Naive thymus-derived CD8-positive, alpha-beta T cell (primary cell): ENCODE measurements at regions of chr17 and their contacts with region 1.

Region 1: DNA sequence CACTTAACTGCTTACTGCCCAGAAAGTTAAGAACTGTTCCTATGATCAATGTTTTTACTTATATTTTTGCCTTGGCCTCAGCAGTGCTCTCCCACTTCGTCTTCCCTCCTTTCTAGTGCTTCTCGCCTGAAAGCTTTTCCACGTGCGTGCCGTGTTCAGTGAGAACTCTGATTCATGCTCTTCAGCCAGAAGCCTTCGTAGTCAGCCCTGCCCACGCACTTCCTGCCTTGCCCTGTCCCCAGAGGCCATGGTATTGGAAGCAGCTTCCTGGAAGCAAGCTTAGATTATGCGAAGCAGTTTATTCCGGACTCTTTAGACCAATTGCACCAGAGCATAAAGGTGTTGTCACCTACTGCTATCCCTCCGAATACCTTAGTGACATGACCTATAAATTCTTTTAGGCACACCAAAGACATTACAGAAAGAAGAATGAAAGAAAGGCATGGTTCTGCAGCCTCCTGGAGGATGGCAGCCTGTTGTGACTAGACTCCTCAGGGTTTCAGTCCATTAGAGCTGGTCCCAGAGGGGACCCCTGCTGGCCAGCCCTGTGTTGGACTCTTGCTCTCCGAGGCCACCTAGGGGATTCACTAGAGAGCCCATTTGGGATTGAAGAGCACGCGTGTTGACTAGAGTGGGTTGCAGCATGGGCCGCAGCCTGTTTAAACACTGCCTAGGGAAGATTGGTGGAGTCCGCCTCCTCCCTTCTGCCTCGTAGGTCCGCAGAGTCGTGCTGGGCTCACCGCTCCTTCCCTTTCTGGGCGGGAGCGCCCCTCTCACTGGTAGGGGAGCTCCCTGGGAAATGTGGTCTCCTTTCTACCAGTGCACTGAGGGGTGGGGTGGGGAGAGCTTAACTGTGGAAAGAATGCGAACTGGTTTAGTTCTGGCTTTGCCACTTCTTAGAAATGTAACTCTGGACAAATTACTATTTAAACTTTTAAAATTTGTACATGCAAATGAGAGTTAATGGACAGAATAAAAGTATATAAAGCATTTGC is 105.3 kb downstream of the RPTOR start:
- DNase-seq: peak; percentile 20 to 81 (median 40)
- ATAC-seq: peak; percentile 96 to 97
- H3K4me3 Mint-ChIP-seq: peak overlapping the region; percentile 68 to 90 (median 78)
- H3K27ac Mint-ChIP-seq: peak overlapping the region; percentile 89 to 96 (median 94)
- H3K4me1 Mint-ChIP-seq: peaks cover 41 to 71% (median 64%) of the 10 kb centered on the region in 4 donors
- H3K27me3 Mint-ChIP-seq: no peaks in the 10 kb centered on the region

Region 2: GRCh38 chr17:80637048-80637781 is 12.8 kb before region 1 on chr17:
- POLR2A ChIA-PET with region 1: interaction called, 10 read pairs
- DNase-seq: no peak
- ATAC-seq: peak; percentile 53 to 61
- H3K4me3 Mint-ChIP-seq: peak overlapping the region in 5 of 10 donors; percentile 62 to 80 (median 65)
- H3K27ac Mint-ChIP-seq: peak overlapping the region in 6 of 10 donors; percentile 72 to 94 (median 90)
- H3K4me1 Mint-ChIP-seq: peaks cover 20 to 35% (median 32%) of the 10 kb centered on the region in 4 donors
- H3K27me3 Mint-ChIP-seq: no peaks in the 10 kb centered on the region

Region 3: DNA sequence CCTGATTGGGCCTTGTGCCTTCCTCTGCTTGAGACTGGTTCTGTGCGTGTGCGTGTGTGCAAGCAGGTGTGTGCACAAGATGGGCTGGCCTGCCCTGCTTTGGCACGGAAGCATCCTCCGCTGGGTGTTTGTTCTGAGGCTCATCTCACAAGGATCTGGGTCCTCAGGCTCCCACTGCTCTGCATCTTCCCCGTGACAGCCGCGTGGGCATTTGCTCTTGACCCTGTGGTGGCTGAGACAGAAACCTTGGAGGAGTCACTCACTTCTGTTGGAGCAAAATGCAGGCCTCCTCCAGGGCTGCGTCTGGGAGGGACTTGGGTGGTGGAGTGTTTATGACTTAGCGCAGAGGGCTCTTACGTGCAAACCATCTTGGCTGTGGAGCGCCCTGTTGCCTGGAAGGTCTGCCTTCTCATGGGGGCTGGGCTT is 13.8 kb after region 1 on chr17:
- POLR2A ChIA-PET with region 1: interaction called, 18 read pairs
- DNase-seq: peak in 8 of 10 donors; percentile 7 to 72 (median 44)
- ATAC-seq: peak; percentile 54 to 62
- H3K4me3 Mint-ChIP-seq: peak overlapping the region; percentile 60 to 94 (median 81)
- H3K27ac Mint-ChIP-seq: peak overlapping the region; percentile 93 to 99 (median 98)
- H3K4me1 Mint-ChIP-seq: peaks cover 47 to 81% (median 72%) of the 10 kb centered on the region in 4 donors
- H3K27me3 Mint-ChIP-seq: no peaks in the 10 kb centered on the region